ENCODE measurements at regions of chr7 and their contacts with region 1.

Region 1: DNA sequence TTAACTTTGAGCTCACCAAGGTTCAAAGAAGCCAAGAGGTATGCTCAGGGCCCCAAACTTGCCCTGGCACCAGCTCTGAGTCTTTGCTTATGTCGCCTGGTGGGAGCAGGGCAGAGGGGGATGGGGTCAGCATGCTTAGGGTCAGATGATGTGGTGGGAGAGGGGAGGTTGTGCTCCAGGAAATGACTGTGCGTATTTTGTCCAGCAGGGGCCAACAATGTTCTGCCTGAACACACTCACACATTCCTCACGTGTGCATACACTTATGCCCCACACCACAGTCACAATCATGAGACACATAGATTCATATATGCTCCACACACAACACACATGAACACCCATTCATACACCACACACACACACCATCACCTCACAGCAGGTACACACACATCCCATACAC is 4.4 kb upstream of the RAMP3 start:
- DNase-seq: no peak
- ATAC-seq: no peak

Region 2: DNA sequence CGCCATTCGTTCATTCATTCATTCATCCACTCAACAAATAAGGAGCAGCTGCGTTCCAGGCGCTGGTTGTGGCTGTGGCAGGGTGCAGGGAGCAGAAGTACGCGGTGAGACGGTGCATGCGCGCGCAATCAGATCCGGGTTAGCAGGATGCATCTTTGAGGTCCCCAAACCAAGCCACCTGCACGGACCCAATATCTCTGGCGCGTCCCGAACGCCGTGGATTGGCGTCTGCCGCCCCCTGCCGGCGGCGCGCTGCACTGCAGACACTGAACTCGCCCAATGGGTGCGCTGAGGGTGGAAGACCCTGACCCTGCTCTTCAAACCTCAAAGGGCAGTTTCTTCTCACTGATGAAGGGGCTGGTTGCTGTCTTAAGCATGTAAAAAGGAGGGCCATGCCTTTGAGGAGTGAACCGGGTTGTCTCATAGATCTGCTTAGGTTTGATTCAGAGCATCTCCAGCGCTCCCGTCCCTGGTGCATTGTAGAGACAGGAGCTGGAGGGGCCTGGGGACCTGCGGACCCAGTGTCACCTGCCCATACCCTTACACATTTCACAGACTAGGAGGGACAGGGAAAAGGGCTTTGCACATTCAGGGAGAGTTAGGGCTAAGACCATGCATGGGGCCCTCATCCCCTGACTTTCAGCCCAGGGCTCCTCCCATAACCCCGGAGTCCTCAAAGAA is 106.9 kb after region 1 on chr7:
- intact Hi-C with region 1: loop called (anchors 2 kb)
- DNase-seq: peak; percentile 77
- ATAC-seq: peak; percentile 92

Region 3: GRCh38 chr7:45863715-45864114 is 710.5 kb after region 1 on chr7:
- intact Hi-C with region 1: loop called (anchors 5 kb)
- DNase-seq: no peak
- ATAC-seq: no peak

Measured in Right ventricle myocardium superior (tissue), 1 donor.